HEK293T (cell line): ENCODE measurements at regions of chr3 and their contacts with region 1.

Region 1: GRCh38 chr3:12663936-12664908 is at the start of gene RAF1:
- DNase-seq: peak; percentile 97

Region 2: DNA sequence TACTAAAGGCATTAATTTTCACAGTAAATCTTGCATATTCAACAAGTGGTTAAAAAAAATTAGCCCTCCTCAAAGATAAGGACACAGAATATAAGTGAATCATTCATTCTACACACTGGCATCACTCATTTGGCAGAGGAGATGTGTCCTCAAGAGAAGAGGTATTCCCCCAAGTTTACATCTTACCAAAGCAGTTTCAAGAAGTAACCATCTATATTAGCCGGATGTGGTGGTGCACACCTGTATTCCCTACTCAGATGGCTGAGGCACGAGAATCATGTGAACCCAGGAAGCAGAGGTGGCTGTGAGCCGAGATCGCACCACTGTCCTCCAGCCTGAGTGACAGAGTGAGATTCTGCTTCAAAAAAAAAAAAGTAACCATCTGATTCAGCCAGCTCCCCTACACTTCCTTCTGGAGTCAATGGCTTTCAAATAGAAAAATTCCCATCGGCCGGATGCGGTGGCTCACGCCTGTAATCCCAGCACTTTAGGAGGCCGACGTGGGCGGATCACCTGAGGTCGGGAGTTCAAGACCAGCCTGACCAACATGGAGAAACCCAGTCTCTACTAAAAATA is 15.8 kb before region 1 on chr3:
- CTCF ChIA-PET with region 1: no interaction called
- POLR2A ChIA-PET with region 1: interaction called, 10 read pairs
- DNase-seq: no peak